ENCODE measurements at regions of chr9 and their contacts with region 1.

Region 1: DNA sequence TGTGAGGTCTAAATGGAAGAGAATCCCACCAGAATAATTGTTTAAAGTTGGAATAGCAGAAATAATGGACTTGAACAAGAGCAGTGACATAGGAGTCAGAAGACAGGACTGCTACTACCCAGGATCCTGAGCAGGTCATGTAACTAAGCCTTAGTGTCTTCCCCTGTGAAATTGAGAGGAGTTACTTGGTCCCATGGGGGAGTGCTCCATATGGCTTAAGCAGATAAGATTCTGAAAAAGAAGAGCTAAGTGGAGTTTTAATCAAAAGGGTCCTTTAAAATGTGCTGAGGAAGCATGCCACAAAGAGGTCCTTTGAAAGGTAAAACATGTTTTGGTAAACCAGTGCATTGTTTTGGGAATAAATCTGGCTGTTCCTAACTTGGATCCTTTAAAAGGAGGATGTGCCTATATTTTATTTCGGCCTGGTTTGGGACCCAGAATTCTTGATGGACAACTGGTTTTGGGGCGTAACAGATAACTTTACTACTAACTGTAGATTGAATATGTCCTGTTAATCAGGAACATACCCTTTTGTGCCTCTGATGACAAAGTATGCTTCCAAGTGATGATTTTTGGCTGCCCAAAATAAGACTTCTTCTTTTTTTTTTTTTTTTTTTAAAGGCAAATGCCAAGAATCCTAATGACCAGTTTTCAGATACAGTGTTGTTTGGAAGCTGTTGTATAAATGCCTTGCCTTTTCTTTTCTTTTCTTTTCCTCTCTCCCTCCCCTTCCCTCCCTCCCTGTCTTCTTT is 5.7 kb downstream of the RCL1 start:
- DNase-seq: no peak
- ATAC-seq: peak in 3 of 4 donors; percentile 33 to 56 (median 49)
- H3K4me3 ChIP-seq: no peak overlapping the region
- H3K27ac ChIP-seq: peak overlapping the region; percentile 70
- H3K4me1 ChIP-seq: peaks cover 42% of the 10 kb centered on the region
- H3K27me3 ChIP-seq: no peaks in the 10 kb centered on the region
- CTCF ChIP-seq: no peak

Region 2: DNA sequence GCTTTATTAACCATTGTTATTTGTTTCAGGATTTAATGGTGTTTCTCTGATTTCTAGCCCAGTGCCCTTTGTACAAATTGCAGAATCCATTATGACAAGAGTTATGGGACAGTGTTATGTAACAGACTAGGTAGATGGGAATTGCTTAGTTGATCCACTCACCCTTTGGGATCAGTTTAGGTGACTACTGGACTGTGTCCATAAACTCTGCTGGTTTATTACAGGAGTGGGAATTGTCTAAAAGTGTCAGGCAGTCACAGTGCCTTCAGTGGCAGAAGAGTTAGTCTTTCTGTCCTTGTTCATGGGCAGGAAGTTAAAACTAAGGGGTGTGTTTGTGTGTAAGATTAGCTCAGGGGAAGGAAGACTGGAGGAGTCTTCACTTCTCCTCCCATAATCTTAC is 23.6 kb after region 1 on chr9:
- intact Hi-C with region 1: loop called in 1 of 2 experiments (anchors 2 kb)
- DNase-seq: no peak
- ATAC-seq: peak in 3 of 4 donors; percentile 16 to 52 (median 24)
- H3K4me3 ChIP-seq: no peak overlapping the region
- H3K27ac ChIP-seq: peak overlapping the region; percentile 67
- H3K4me1 ChIP-seq: peaks cover 19% of the 10 kb centered on the region
- H3K27me3 ChIP-seq: no peaks in the 10 kb centered on the region
- CTCF ChIP-seq: no peak

Measured in psoas muscle (tissue), 8 donors.